Activated CD8-positive, alpha-beta T cell treated with anti-CD3 and anti-CD28 coated beads for 36 hours (primary cell): ENCODE measurements at regions of chr6 and their contacts with region 1.

Region 1: DNA sequence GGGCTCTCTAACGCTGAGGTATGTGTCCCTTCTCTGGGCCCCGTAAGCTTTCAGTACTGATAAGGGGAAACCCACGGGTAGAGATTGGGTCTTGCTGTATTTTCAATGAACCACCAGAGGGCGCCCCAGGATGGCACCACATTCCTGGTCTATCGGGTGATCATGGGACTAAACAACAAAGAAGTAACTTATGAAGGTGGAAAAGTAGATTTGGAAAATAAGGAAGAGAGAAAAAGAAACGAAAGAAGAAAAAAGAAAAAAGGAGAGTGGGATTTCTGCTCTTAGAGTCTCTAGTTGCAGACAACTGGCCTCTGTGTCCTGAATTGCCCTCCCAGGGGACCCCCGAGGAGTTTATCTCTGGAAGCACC is 93.8 kb downstream of the GMPR start:
- DNase-seq: peak; percentile 90
- ATAC-seq: peak; percentile 99
- H3K4me3 Mint-ChIP-seq: no peak overlapping the region
- H3K27ac Mint-ChIP-seq: no peak overlapping the region
- H3K4me1 Mint-ChIP-seq: peaks cover 3% of the 10 kb centered on the region
- H3K27me3 Mint-ChIP-seq: no peaks in the 10 kb centered on the region
- CTCF ChIP-seq: peak; percentile 81

Region 2: GRCh38 chr6:16319813-16320532 is 12.2 kb before region 1 on chr6:
- CTCF ChIA-PET with region 1: interaction called, 54 read pairs
- POLR2A ChIA-PET with region 1: interaction called, 4 read pairs
- intact Hi-C with region 1: no loop called
- DNase-seq: peak; percentile 82
- ATAC-seq: peak; percentile 56
- H3K4me3 Mint-ChIP-seq: peak overlapping the region; percentile 61
- H3K27ac Mint-ChIP-seq: peak overlapping the region; percentile 94
- H3K4me1 Mint-ChIP-seq: peaks cover 78% of the 10 kb centered on the region
- H3K27me3 Mint-ChIP-seq: no peaks in the 10 kb centered on the region
- CTCF ChIP-seq: no peak

Region 3: DNA sequence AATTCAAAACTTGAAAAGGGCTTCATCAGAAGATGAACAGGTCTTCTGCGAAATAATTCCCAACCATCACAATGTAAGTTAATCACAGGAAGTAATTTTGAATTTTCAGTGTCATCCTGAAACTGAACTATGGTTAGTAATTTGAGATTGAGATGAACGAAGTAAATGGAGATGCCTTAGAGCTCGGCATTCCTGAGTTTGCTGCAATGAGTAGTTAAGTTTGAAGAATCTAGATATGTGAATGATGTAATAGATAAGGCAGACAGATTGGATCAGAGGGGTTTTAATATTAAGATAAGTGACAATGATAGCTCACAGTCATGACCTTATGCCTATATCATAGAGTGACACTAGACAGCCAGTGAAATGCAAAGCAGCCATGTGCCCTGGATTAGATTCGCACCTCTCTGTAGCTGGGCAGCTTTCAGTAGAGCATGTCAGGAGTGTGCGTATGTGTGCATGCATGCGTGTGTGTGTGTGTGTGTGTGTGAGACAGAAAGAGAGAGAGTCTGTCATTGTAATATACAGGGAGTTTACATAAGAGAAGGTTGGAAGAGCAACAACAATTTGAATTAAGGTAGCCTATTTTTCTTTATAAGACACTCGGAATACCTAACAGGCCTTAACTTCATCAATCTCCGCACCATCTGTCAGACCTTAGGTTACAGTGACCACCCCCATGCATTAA is 139.2 kb after region 1 on chr6:
- CTCF ChIA-PET with region 1: interaction called, 11 read pairs
- POLR2A ChIA-PET with region 1: interaction called, 3 read pairs
- intact Hi-C with region 1: no loop called
- DNase-seq: peak; percentile 55
- ATAC-seq: peak; percentile 51
- H3K4me3 Mint-ChIP-seq: no peak overlapping the region
- H3K27ac Mint-ChIP-seq: peak overlapping the region; percentile 86
- H3K4me1 Mint-ChIP-seq: peaks cover 78% of the 10 kb centered on the region
- H3K27me3 Mint-ChIP-seq: no peaks in the 10 kb centered on the region
- CTCF ChIP-seq: no peak

Region 4: DNA sequence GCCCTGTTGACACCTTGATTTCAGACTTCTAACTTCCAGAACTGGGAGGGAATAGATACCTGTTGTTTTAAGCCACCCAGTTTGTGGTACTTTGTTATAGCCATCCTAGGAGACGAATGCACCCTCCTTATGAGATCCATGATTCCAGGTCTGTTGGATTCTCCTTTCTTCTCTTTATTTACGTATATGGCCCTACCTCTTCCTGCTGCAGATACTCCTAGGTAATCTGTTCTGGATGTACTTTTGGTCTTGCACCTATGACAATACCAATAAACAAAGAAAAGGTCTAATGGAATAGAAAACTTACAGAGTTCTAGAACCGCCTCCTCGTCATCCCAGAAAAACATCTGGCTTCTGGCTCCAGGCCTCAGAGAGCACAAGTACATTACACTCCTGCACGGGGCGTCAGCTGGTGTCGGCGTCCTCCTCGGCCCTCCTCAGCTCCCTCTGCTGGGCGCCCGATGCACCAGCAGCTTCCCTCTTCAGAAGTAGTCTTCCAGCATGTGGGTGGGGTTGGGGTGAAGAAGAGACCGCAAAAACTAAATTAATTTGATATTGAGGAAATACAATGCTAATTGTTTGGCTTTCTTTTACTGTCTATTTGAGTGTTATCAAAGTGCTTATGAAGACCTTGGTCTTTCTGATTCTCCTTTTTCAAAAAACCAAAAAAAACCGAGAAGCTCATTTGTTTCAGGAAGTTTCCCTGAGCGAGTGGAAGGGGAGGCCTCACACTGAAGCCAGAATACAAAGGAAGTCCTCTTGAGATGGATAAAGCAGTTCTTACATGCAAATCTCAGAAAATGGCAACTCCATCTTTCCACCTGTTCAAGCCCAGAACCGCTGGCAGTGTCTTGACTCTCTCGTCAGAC is 438.8 kb after region 1 on chr6:
- CTCF ChIA-PET with region 1: interaction called, 18 read pairs
- POLR2A ChIA-PET with region 1: no interaction called
- intact Hi-C with region 1: no loop called
- DNase-seq: peak; percentile 80
- ATAC-seq: peak; percentile 69
- H3K4me3 Mint-ChIP-seq: no peak overlapping the region
- H3K27ac Mint-ChIP-seq: no peak overlapping the region
- H3K4me1 Mint-ChIP-seq: peaks cover 52% of the 10 kb centered on the region
- H3K27me3 Mint-ChIP-seq: no peaks in the 10 kb centered on the region
- CTCF ChIP-seq: peak; percentile 96